ENCODE measurements at regions of chr5 and their contacts with region 1.

Region 1: DNA sequence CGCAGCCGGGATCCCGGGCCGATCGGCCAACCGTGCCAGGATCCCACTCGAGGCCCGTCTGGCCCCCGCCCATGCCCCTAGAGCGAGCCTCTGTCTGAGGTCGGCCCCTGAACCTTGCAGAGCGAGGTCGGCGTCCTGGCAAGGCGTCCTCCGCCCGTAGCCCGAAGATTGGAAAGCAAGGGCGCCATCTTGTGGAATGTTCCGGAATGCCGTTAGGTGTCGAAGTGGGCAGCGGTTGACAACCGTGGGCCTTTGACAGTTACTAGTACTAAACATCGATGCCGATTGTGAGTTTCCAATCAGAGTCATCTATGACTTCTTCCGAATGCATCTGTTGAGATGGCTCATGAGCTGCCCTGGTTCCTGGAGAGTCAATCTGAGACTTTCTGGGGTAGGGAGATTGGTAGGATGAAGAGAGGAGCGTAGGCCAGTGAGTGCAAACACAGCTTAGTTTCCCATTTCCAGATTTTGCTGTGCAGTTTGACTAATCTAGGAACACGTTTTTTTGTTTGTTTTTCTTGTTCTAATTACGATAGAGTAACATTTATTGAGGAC is 923 bp upstream of the PLK2 start:
- DNase-seq: peak; percentile 75
- H3K4me3 ChIP-seq: peak overlapping the region; percentile 69
- CTCF ChIP-seq: peak; percentile 75

Region 2: GRCh38 chr5:57298295-57298984 is 1162.4 kb before region 1 on chr5:
- in situ Hi-C with region 1: loop called (anchors 10 kb)
- DNase-seq: peak; percentile 87
- H3K4me3 ChIP-seq: no peak overlapping the region
- CTCF ChIP-seq: peak; percentile 81

Region 3: DNA sequence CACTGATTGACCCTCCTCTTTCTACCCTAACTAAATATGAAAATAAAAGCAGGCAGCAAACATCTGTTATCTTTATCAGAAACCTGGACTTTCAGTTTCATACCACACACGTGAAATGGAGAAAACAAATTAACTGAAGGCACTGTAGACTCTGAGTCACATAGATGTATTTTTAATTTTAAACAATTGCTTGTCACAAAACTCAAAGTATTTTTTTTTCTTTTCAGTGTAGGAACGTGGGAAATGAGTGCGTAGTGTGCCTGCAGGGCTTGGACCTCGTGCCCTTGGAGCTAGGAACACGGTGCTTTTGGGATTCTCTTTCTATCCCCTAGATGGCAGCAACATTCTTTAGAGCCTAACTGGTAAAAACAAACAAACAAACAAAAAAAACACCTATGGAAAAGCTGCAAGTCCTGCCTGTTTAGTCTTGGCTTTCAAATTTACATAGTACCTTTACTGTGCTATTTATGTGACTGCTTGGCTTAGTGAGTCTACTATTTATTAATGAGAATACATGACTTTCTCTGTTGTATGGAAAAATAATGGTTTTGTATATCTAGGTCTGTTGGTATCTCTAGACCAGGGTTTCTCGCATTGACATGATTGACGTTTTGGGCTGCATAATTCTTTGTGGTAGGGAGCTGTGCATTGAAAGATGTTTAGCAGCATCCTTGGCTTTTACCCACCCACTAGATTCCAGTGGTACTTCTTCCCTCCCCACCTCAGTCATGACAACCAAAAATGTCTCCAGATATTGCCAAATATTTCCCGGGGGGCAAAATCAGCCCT is 961.4 kb before region 1 on chr5:
- in situ Hi-C with region 1: loop called (anchors 5 kb)
- DNase-seq: peak; percentile 42
- H3K4me3 ChIP-seq: no peak overlapping the region
- CTCF ChIP-seq: peak; percentile 77

Region 4: DNA sequence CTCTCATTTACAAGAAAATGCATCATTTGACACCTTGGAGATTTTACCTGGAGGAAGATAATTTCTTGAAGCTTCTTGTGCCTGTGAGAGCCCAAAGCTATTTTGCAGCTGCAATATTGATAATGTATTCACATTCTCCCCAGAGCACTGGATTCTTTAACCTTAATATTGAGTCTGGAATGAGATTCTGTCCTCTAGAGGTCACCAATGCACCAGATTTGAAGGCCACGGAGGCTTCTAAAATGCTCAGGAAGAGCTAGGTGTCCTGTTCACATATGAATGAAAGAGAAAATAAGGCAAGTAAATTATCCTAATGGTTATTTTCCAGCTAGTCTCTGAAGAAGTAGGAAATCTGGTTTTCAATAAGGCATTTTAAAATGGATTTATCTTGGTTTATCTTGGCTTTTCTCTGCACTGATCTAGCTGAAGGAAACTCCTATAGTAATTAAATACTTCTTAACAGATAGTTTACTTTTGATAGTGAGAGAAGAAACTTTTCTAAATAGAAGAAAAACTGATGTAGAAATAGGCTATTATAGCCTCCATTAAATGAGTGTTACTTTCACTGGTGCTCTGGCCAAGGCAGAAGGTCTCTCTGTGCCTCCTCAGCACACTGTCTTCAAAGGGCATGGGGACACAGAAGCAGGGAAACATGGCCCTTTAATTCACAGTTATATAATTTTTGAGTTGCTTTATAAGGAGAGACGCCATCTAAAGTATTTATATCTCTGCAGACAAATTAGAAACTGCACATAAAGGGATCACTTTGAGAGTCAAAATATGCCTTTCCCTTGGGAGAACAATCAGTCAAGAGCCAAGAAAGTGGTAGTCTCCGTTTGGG is 681.2 kb before region 1 on chr5:
- in situ Hi-C with region 1: loop called (anchors 10 kb)
- DNase-seq: peak; percentile 82
- H3K4me3 ChIP-seq: no peak overlapping the region
- CTCF ChIP-seq: peak; percentile 62

Region 5: DNA sequence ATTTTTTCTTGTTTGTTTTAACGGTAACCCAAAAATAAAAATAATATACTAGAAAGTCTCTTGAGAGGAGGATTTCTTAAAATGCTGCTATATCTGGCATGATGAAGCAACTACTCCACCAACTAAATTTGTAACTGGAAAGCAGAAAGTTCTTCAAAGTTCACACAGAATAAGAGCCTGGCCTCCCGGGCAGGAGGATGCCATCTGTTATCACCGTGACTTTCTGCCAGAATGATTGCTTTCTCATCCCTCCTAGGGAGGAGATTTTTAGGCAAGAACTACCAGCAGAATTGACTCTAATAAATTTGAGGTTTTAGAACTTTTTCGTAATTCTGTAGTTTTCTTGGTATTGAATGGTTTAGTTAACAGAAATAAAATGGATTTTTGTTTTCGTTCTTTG is 513.6 kb before region 1 on chr5:
- in situ Hi-C with region 1: no loop called
- DNase-seq: no peak
- H3K4me3 ChIP-seq: no peak overlapping the region
- CTCF ChIP-seq: no peak

Region 6: DNA sequence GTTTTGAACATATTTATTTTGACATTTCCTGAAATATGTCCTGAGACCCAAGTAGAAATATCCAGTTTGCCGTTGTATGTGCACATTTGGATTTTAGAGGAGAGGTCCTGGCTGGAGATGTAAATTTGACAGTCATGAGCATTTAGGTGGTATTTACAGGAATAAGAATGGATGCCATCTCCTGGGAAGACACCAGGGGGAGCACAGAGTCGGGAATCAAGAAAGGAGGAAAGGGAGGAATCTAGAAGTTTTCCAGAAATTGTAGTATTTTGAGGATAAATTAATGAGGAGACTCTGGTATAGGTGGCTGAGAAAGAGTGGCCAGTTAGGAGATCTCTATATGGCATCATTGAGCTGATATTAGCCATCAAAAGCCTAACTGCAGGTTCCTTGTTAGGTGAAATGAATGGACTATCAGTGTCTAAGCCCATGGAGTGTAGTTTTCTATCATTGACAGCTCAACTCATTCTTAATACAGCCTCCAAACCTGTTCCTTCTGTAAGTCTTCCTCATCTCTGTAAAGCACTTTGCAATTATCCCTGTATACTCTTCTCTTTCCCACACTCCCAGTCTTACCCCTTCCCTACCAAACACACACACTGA is 37.6 kb after region 1 on chr5:
- in situ Hi-C with region 1: no loop called
- DNase-seq: peak; percentile 18
- H3K4me3 ChIP-seq: no peak overlapping the region
- CTCF ChIP-seq: peak; percentile 84

Region 7: DNA sequence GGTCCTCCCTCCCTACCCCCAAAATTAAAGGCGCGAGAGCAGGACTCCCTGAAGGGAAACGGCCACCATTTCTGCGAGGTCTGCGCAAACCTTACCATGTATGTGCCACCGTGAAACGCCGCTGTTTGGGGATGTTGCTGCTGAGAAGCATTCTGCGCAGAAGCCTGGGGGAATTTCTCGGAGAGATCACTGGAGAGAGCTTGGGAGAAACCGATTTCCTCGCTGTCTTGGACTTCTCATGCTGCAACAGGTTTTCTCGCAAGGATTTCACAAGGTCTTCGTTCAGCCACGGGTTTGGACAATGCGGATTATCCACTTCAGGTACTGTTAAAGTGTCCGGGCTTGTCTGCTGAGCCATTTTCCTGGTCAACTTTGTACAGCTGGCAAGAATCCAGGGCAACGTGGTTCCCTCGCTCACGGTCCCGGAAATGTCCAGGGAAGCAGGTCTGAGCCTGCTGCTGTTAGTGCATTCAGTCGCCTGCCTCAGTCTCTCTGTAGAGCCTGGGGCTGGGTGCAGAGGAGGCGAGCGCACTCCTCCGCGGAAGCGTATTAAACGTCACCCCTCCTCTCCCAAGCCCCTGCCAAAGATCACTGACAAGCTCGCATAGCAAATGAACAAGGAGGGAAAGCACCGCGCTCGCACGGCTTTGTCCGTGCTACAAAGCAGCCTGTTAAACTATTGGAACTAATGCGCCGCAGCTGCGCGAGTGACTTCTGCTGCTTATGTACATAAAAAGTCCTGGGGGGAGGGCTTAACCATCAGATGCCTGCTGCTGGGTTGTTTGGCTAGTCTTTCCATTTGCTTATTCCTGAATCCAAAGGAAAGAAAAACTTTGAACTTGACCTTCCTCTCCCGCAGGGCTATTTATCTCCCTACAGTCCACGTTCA is 1307.6 kb after region 1 on chr5:
- in situ Hi-C with region 1: no loop called
- DNase-seq: peak; percentile 86
- H3K4me3 ChIP-seq: peak overlapping the region; percentile 49
- CTCF ChIP-seq: no peak

Measured in astrocyte of the cerebellum (primary cell).